PC-3 (cell line): ENCODE measurements at regions of chr4 and their contacts with region 1.

Region 1: GRCh38 chr4:174437324-174437723 is 85.0 kb downstream of the HPGD start:
- DNase-seq: peak; percentile 86
- ATAC-seq: peak; percentile 96
- H3K4me3 ChIP-seq: no peak overlapping the region
- H3K27ac ChIP-seq: peak overlapping the region; percentile 82
- H3K4me1 ChIP-seq: peaks cover 18% of the 10 kb centered on the region
- H3K27me3 ChIP-seq: no peaks in the 10 kb centered on the region
- CTCF ChIP-seq: no peak

Region 2: DNA sequence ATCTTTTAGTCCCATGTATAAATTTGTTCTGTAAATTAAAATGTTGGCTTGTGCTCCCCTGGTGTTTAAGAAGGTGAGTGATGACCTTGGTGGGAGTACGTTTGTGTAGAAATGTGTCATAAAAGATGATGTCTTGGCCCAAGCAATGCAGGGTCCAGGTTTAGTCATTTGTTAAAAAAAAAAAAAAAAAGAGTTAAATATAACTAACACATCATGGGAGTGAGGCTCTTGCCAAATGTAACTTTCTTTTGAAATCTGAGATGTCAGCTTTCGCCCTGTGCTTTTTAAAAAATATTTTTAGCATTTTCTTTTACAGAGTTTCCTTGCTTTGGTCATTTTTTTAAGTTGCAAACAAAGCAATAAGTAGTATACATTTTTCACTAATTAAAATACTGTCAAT is 289.5 kb before region 1 on chr4:
- CTCF ChIA-PET with region 1: no interaction called
- POLR2A ChIA-PET with region 1: no interaction called
- intact Hi-C with region 1: no loop called
- DNase-seq: no peak
- ATAC-seq: no peak
- H3K4me3 ChIP-seq: no peak overlapping the region
- H3K27ac ChIP-seq: no peak overlapping the region
- H3K4me1 ChIP-seq: no peaks in the 10 kb centered on the region
- H3K27me3 ChIP-seq: peaks cover 90% of the 10 kb centered on the region
- CTCF ChIP-seq: no peak

Region 3: GRCh38 chr4:174377613-174378012 is 59.7 kb before region 1 on chr4:
- CTCF ChIA-PET with region 1: no interaction called
- POLR2A ChIA-PET with region 1: no interaction called
- intact Hi-C with region 1: loop called (anchors 5 kb)
- DNase-seq: peak; percentile 87
- ATAC-seq: peak; percentile 98
- H3K4me3 ChIP-seq: no peak overlapping the region
- H3K27ac ChIP-seq: peak overlapping the region; percentile 74
- H3K4me1 ChIP-seq: peaks cover 18% of the 10 kb centered on the region
- H3K27me3 ChIP-seq: no peaks in the 10 kb centered on the region
- CTCF ChIP-seq: no peak

Region 4: DNA sequence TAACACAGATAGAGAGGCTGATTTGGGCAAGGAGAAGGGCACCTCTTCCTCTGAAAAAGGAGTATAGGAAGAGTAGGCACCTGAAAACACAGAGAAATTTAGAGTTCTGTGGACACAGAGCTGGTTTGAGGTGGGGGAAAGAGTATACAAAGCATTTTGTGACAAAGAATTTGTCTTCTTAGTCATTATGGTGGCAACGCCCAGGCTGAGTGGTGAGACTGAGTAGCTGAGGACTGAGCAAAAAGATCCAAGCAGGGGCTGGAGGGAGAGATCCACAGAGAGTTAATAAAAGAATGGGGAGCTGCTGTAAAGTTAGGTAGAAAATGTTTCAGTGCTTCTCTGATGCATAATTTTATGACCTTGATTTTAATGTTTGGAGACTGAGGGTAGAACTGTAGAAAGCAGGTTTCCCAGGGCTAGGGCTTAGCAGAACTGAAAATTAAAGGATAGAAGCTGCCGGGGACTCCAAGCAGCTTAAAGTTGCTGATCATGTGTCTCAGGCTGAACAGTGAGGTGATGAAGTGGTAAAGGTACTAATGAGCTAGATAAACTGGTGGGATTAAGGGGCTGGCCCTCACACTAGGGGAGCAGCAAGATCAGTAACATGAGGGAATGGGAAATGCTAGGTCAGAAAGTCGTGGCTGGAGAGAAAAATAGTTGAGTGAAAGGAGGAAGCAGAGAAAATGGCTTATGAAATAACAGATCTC is 34.7 kb before region 1 on chr4:
- CTCF ChIA-PET with region 1: no interaction called
- POLR2A ChIA-PET with region 1: no interaction called
- intact Hi-C with region 1: loop called (anchors 2 kb)
- DNase-seq: peak; percentile 63
- ATAC-seq: peak; percentile 68
- H3K4me3 ChIP-seq: no peak overlapping the region
- H3K27ac ChIP-seq: peak overlapping the region; percentile 79
- H3K4me1 ChIP-seq: peaks cover 43% of the 10 kb centered on the region
- H3K27me3 ChIP-seq: no peaks in the 10 kb centered on the region
- CTCF ChIP-seq: no peak